ENCODE measurements at regions of chr17 and their contacts with region 1.

Region 1: DNA sequence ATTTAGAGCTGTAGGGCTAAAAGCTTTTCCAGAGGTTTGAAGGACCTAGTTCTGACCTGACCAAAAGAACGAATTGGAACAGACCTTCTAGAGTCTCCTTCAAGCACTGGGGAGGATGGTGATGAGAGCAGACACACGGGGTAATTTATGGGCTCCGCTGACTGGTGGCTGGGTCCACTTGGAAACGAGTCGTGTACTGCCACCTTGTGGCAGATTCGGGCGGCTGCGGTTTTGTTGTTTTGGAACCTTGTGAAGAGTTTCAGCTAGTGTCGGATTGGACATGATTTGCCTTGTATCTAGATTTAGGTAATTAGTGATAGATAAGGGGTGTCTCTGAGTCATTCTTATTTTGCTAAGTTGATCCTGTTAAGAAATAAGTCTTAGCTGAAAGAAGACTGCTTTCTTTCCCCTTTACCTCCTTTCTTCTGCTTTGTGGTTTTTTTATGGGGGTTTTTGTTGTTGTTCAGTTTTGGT is 98.9 kb downstream of the AATF start:
- DNase-seq: peak; percentile 72 to 90
- H3K4me3 ChIP-seq: no peak overlapping the region
- H3K27ac ChIP-seq: no peak overlapping the region
- H3K4me1 ChIP-seq: peaks cover 6 to 24% (median 12%) of the 10 kb centered on the region in 4 experiments
- H3K27me3 ChIP-seq: no peaks in the 10 kb centered on the region
- CTCF ChIP-seq: peak; percentile 81 to 94 (median 88)
- EP300 ChIP-seq: no peak
- POLR2A ChIP-seq: no peak
- RAD21 ChIP-seq: peak; percentile 94 to 96

Region 2: DNA sequence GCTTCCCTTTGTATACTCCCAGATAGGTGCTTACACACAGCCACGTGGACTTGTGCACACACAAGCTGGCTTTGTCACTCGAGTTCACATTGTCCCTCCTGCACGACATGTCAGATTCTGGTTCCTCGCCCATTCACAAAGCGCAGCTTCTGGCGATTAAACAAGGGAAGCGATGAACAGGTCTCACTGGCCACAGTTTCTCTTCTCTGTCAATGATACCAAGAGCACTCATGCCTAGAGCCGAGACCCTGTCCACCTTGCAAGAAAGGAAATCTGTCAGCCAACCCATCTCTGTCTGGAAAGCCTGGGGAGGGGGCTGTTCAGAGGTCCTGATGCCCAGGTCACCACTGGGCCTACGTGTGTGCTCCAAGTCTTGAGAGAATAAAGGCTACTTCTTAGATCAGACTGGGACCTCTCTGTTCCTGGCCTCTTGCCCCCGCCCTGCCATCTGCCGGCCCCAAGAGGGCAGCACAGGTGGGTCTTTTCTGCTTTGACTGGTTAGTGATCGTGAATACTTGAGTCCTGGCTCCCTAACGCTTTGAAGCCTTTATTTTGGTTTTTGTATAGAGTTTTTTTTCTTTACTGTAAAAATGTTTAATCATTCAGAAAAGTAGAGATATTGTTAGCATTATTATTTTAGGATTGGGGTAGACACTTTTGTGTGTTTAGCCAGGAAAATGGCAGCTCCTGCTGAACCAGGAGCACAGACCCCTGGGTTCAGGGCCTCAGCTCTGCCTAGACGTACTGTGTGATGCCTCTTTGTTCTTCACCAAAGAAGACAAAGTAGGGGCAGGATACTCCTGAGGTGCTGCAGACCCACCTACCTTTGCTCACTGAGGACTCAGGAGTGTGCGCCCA is 341.6 kb before region 1 on chr17:
- CTCF ChIA-PET with region 1: interaction called, 16 read pairs
- POLR2A ChIA-PET with region 1: no interaction called
- DNase-seq: no peak
- H3K4me3 ChIP-seq: no peak overlapping the region
- H3K27ac ChIP-seq: no peak overlapping the region
- H3K4me1 ChIP-seq: peaks cover 0 to 8% (median 2%) of the 10 kb centered on the region in 4 experiments; a peak in 2 of 7 replicates
- H3K27me3 ChIP-seq: peaks cover 0 to 15% (median 7%) of the 10 kb centered on the region in 4 experiments; a peak in 6 of 7 replicates
- CTCF ChIP-seq: peak; percentile 81 to 88 (median 82)
- EP300 ChIP-seq: no peak
- POLR2A ChIP-seq: no peak
- RAD21 ChIP-seq: peak; percentile 81 to 88

Region 3: GRCh38 chr17:36768394-36768793 is 279.3 kb before region 1 on chr17:
- CTCF ChIA-PET with region 1: interaction called, 14 read pairs
- POLR2A ChIA-PET with region 1: no interaction called
- DNase-seq: peak in 1 of 2 experiments; percentile 70
- H3K4me3 ChIP-seq: no peak overlapping the region
- H3K27ac ChIP-seq: no peak overlapping the region
- H3K4me1 ChIP-seq: peaks cover 0 to 23% (median 10%) of the 10 kb centered on the region in 4 experiments
- H3K27me3 ChIP-seq: no peaks in the 10 kb centered on the region; a peak in 2 of 7 replicates
- CTCF ChIP-seq: peak; percentile 50 to 72 (median 62)
- EP300 ChIP-seq: no peak
- POLR2A ChIP-seq: no peak
- RAD21 ChIP-seq: peak; percentile 80 to 81

Region 4: DNA sequence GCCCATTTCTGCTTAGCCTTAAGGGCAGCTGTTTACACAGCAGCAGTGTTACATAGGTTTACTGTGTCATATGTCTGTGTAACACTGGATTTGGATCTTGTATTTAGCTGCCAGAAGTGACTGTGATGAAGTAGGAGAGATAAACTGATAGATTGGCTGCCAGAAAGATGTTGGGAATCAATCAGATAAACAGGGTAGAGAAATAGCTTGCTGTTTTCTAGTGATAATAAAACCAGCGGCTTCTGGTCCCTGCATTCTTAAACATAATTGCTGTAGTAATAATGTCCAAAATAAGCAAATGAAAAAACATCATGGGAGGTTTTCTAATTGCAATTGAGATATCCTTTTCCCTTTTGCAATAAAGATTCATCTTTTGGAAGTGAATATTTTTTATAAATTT is 30.3 kb before region 1 on chr17:
- CTCF ChIA-PET with region 1: interaction called, 11 read pairs
- POLR2A ChIA-PET with region 1: no interaction called
- DNase-seq: no peak
- H3K4me3 ChIP-seq: no peak overlapping the region
- H3K27ac ChIP-seq: no peak overlapping the region
- H3K4me1 ChIP-seq: peaks cover 0 to 2% (median under 1%) of the 10 kb centered on the region in 4 experiments; a peak in 5 of 7 replicates
- H3K27me3 ChIP-seq: no peaks in the 10 kb centered on the region
- CTCF ChIP-seq: no peak
- EP300 ChIP-seq: no peak
- POLR2A ChIP-seq: no peak
- RAD21 ChIP-seq: no peak

Region 5: DNA sequence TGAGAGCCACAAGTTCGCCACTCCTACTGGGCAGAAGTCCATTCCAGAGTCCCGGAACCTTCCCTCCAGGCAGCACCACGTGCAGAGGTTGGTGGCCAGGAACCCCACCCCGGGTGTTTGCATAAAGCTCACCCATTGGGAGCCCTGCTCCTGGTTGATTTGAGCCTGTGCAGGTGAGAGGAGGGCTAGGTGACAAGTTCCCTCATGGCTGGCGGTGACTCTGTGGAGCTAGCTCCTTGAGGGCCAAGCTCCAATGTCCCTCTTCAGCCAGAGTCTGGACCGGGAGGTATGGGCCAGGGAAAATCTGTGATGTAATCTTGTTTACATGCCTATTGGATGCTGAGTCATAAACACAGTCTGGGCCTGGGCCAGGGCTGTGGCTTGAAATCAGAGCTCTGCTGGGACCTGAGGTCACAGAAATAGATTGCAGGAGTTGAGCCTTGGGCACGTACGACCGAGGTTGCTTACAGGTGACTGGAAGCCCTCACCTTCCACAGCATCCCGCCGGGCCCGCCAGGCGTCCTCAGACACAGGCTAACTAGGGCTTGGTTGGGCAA is 20.0 kb after region 1 on chr17:
- CTCF ChIA-PET with region 1: interaction called, 14 read pairs
- POLR2A ChIA-PET with region 1: no interaction called
- DNase-seq: no peak
- H3K4me3 ChIP-seq: no peak overlapping the region
- H3K27ac ChIP-seq: no peak overlapping the region
- H3K4me1 ChIP-seq: peaks cover 21 to 44% (median 37%) of the 10 kb centered on the region in 4 experiments
- H3K27me3 ChIP-seq: no peaks in the 10 kb centered on the region; a peak in 1 of 7 replicates
- CTCF ChIP-seq: no peak
- EP300 ChIP-seq: no peak
- POLR2A ChIP-seq: no peak
- RAD21 ChIP-seq: no peak

Region 6: DNA sequence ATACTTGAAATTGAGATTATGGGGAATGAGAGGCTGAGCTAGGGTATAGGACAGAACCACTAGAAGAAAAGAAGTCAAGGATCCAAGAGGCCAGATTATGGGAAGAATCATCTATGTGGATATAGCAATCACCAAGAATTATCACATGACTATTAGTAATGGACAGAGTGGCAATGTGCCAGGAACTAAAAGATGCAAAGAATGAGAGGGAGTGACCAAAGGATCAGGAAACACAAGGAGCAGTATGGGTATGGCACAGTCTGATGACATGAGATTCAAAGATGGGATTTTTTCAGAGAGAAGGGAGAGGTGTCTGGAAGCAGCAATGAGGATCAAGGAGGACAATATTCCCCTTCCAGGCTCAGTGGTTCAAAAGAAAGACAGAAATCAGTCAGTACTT is 113.3 kb after region 1 on chr17:
- CTCF ChIA-PET with region 1: no interaction called
- POLR2A ChIA-PET with region 1: no interaction called
- DNase-seq: no peak
- H3K4me3 ChIP-seq: no peak overlapping the region
- H3K27ac ChIP-seq: no peak overlapping the region
- H3K4me1 ChIP-seq: peaks cover 0 to 2% (median 0%) of the 10 kb centered on the region in 4 experiments; a peak in 1 of 7 replicates
- H3K27me3 ChIP-seq: no peaks in the 10 kb centered on the region
- CTCF ChIP-seq: no peak
- EP300 ChIP-seq: no peak
- POLR2A ChIP-seq: no peak
- RAD21 ChIP-seq: no peak

Measured in H1 (cell line).